Naive thymus-derived CD4-positive, alpha-beta T cell (primary cell): ENCODE measurements at regions of chr15 and their contacts with region 1.

Region 1: DNA sequence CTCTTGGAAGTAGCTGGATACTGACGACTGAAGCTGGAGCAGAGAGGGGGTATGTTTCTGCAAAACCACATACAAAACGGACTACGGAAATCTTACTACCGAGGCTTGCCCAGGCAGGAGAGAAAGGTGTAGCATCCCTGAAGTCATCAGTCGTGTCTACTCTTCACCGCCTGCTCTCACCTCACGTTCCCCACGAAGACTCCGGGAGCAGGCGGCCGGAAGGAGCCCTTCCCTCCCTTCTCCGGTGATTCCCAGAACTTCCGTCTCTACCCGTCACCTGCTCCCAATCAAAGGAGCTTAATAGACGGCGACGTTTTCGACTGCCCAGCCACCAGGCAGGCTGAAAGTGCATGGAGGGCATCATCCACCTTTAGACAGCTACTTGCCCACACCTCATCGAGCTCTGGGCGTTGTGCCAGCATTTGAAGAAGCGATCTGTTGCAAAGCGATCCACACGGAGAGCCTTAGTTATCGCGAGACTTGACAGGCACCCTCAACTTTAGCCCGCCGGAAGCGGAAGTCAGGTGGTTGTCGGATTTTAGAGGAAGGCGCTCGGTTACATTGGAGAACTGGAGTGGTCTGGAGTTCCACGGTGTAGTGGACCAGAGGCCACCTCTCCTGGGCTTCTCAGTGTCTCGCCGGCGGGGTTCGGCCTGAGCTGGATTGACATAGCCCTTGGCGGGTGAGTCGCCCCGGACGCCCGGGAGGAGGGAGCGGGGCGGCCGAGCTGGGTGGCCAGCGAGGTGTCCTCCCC is at the start of gene RAMAC:
- DNase-seq: peak; percentile 70 to 97 (median 91)
- ATAC-seq: peak; percentile 93
- H3K4me3 ChIP-seq: peak within 1 kb of the TSS; percentile 90
- H3K4me3 Mint-ChIP-seq: peak within 1 kb of the TSS; percentile 84 to 100 (median 99)
- H3K27ac ChIP-seq: peak within 1 kb of the TSS; percentile 82
- H3K27ac Mint-ChIP-seq: peak within 1 kb of the TSS; percentile 73 to 99 (median 95)
- H3K4me1 ChIP-seq: peaks cover 14 to 18% of the 10 kb centered on the region in 2 donors
- H3K4me1 Mint-ChIP-seq: peaks cover 21 to 43% (median 35%) of the 10 kb centered on the region in 7 donors
- H3K27me3 ChIP-seq: no peaks in the 10 kb centered on the region
- H3K27me3 Mint-ChIP-seq: no peaks in the 10 kb centered on the region
- total RNA-seq, gene RAMAC: 14.2 to 27.7 (median 18.7) TPM

Region 2: GRCh38 chr15:82647045-82647834 is 338.6 kb before region 1 on chr15 and contains the start of gene CPEB1:
- CTCF ChIA-PET with region 1: no interaction called
- POLR2A ChIA-PET with region 1: no interaction called
- intact Hi-C with region 1: loop called in 1 of 2 experiments (anchors 2 kb)
- DNase-seq: peak; percentile 4 to 33 (median 26)
- ATAC-seq: peak; percentile 68
- H3K4me3 ChIP-seq: peak within 1 kb of the TSS; percentile 47
- H3K4me3 Mint-ChIP-seq: peak within 1 kb of the TSS; percentile 62 to 85 (median 71)
- H3K27ac ChIP-seq: no peak within 1 kb of the TSS
- H3K27ac Mint-ChIP-seq: peak within 1 kb of the TSS in 2 of 9 donors; percentile 59 to 62
- H3K4me1 ChIP-seq: peaks cover 0 to 14% of the 10 kb centered on the region in 2 donors
- H3K4me1 Mint-ChIP-seq: peaks cover 0 to 9% (median 4%) of the 10 kb centered on the region in 7 donors
- H3K27me3 ChIP-seq: peaks cover 5 to 15% of the 10 kb centered on the region in 2 donors
- H3K27me3 Mint-ChIP-seq: peaks cover 21 to 69% (median 41%) of the 10 kb centered on the region in 5 donors
- total RNA-seq, gene CPEB1: 0.24 to 1.0 (median 0.51) TPM in 4 of 5 experiments, not detected in the other

Region 3: GRCh38 chr15:82749951-82750830 is 235.7 kb before region 1 on chr15:
- CTCF ChIA-PET with region 1: no interaction called
- POLR2A ChIA-PET with region 1: interaction called, 3 read pairs
- intact Hi-C with region 1: loop called (anchors 1 to 2 kb)
- DNase-seq: peak; percentile 51 to 84 (median 70)
- ATAC-seq: peak; percentile 96
- H3K4me3 ChIP-seq: peak overlapping the region; percentile 88
- H3K4me3 Mint-ChIP-seq: peak overlapping the region; percentile 93 to 100 (median 98)
- H3K27ac ChIP-seq: peak overlapping the region; percentile 78
- H3K27ac Mint-ChIP-seq: peak overlapping the region; percentile 89 to 98 (median 95)
- H3K4me1 ChIP-seq: peaks cover 10 to 15% of the 10 kb centered on the region in 2 donors
- H3K4me1 Mint-ChIP-seq: peaks cover 26 to 69% (median 57%) of the 10 kb centered on the region in 7 donors
- H3K27me3 ChIP-seq: no peaks in the 10 kb centered on the region
- H3K27me3 Mint-ChIP-seq: no peaks in the 10 kb centered on the region

Region 4: DNA sequence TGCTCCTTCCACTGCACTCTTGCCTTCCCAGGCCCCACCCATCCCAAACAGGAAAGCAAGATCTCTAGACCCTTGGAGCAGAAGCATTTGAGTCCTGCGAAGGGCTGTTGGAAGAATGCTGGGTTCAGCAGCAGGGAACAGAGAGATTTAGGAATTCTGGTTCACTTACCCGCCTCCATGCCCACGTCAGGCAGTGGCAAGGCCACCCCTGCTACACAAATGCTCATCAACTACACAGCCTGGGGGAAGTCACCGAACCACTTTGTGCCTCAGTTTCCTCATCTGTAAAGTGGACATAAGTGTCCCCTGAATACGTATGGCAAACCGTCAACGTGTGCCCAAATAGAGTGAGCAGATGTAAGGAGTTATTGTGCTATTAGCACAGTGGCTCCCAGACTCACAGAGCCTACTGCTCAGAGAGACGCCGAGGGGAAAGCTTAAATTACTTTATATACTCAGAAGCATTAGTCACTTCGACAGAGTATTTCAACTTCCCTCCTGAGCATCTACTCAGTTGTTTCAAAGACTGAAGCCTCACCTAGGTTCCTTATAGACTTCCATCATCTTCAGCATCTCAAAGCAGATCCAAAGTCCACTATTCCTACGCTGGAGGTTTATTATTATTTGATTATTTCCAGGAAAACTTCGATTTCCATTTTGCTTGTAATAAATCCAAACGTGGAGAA is 34.2 kb before region 1 on chr15:
- CTCF ChIA-PET with region 1: no interaction called
- POLR2A ChIA-PET with region 1: no interaction called
- intact Hi-C with region 1: loop called in 1 of 2 experiments (anchors 2 kb)
- DNase-seq: no peak
- ATAC-seq: no peak
- H3K4me3 ChIP-seq: peak overlapping the region; percentile 24
- H3K4me3 Mint-ChIP-seq: peak overlapping the region in 8 of 10 donors; percentile 64 to 86 (median 77)
- H3K27ac ChIP-seq: no peak overlapping the region
- H3K27ac Mint-ChIP-seq: peak overlapping the region in 1 of 9 donors; percentile 74
- H3K4me1 ChIP-seq: peaks cover 0 to 4% of the 10 kb centered on the region in 2 donors
- H3K4me1 Mint-ChIP-seq: peaks cover 0 to 6% (median 0%) of the 10 kb centered on the region in 7 donors
- H3K27me3 ChIP-seq: peaks cover 0 to 7% of the 10 kb centered on the region in 2 donors
- H3K27me3 Mint-ChIP-seq: peaks cover 0 to 23% (median 4%) of the 10 kb centered on the region in 5 donors

Region 5: GRCh38 chr15:83011271-83012075 is 25.6 kb after region 1 on chr15 and contains the start of gene C15orf40:
- CTCF ChIA-PET with region 1: interaction called, 4 read pairs
- POLR2A ChIA-PET with region 1: interaction called, 27 read pairs
- intact Hi-C with region 1: loop called (anchors 1 kb)
- DNase-seq: peak; percentile 71 to 90 (median 80)
- ATAC-seq: peak; percentile 92
- H3K4me3 ChIP-seq: peak within 1 kb of the TSS; percentile 91
- H3K4me3 Mint-ChIP-seq: peak within 1 kb of the TSS; percentile 91 to 100 (median 96)
- H3K27ac ChIP-seq: peak within 1 kb of the TSS; percentile 77
- H3K27ac Mint-ChIP-seq: peak within 1 kb of the TSS; percentile 88 to 98 (median 92)
- H3K4me1 ChIP-seq: peaks cover 14 to 24% of the 10 kb centered on the region in 2 donors
- H3K4me1 Mint-ChIP-seq: peaks cover 43 to 70% (median 55%) of the 10 kb centered on the region in 7 donors
- H3K27me3 ChIP-seq: no peaks in the 10 kb centered on the region
- H3K27me3 Mint-ChIP-seq: no peaks in the 10 kb centered on the region
- total RNA-seq, gene C15orf40: 12.1 to 47.2 (median 28.9) TPM